ENCODE measurements at regions of chr1 and their contacts with region 1.

Region 1: GRCh38 chr1:45430490-45430889 is 60.5 kb downstream of the TESK2 start:
- DNase-seq: no peak
- H3K4me3 ChIP-seq: no peak overlapping the region
- H3K27me3 ChIP-seq: no peaks in the 10 kb centered on the region
- CTCF ChIP-seq: no peak

Region 2: GRCh38 chr1:45334308-45335245 is 95.9 kb before region 1 on chr1:
- CTCF ChIA-PET with region 1: no interaction called
- POLR2A ChIA-PET with region 1: no interaction called
- DNase-seq: no peak
- H3K4me3 ChIP-seq: no peak overlapping the region
- H3K27me3 ChIP-seq: no peaks in the 10 kb centered on the region
- CTCF ChIP-seq: no peak

Region 3: DNA sequence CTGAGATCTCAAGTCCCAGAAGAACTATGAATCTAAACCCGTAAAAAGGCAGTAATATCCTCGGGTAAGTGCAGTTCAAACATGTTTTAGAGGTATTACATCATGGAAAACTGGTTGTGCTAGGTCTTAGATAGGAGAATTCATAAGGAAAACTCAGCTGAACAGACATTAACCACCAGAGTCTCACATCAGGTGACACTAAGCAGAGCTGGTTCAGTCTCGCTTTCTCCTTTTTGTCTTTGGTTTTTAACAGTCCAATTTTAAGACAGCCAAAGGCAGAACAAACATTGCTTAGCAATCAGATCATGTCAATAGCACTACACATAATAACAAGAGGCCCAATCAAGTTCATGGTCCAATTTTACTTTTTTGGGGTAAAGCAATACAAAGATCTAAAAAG is 27.2 kb before region 1 on chr1:
- CTCF ChIA-PET with region 1: interaction called, 3 read pairs
- POLR2A ChIA-PET with region 1: interaction called, 21 read pairs
- DNase-seq: no peak
- H3K4me3 ChIP-seq: no peak overlapping the region
- H3K27me3 ChIP-seq: no peaks in the 10 kb centered on the region
- CTCF ChIP-seq: no peak

Region 4: DNA sequence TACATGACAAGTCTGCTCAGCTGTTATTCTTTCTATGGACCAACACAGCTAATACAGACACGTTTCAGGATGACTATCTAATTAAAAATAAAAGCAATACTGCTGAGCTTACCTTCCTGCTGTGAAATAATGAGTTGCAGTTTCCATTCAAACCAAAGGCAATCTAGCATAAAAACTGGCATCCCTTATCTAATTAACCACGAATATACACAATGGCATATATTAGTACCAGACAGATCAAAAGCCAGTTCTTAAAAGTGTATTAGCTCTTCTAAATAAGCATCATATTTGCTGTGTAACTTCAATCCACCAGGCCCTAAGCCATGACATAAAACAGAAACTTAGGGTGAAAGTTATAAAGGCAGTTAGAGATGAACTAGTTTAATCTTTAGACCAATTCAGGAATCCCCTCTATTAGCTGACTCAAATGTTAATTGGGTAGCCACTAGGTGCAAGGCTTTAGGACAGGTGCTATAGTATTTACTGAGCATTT is 39.9 kb after region 1 on chr1:
- CTCF ChIA-PET with region 1: no interaction called
- POLR2A ChIA-PET with region 1: no interaction called
- DNase-seq: no peak
- H3K4me3 ChIP-seq: no peak overlapping the region
- H3K27me3 ChIP-seq: no peaks in the 10 kb centered on the region
- CTCF ChIP-seq: no peak

Region 5: DNA sequence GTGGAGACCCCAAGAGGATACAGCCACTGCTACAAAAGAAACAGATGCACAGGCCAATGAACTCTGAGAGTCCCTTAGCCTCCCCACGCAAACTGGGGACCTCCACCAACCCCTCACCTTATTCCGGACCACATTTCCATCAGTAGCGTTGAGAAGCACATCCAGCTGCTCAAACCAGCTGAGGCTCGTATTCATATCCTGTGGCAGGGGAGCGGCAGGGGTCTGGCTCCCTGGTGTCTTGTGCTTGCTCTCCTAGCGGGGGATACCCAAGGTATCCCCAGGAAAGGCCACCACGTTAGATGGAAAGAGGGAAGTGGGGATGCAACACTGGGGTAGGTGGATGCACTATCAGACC is 68.9 kb after region 1 on chr1:
- CTCF ChIA-PET with region 1: no interaction called
- POLR2A ChIA-PET with region 1: no interaction called
- DNase-seq: no peak
- H3K4me3 ChIP-seq: peak overlapping the region; percentile 70
- H3K27me3 ChIP-seq: no peaks in the 10 kb centered on the region
- CTCF ChIP-seq: no peak